ENCODE measurements at regions of chrX and their contacts with region 1.

Region 1: GRCh38 chrX:16870095-16870860 is at the start of gene RBBP7:
- DNase-seq: peak; percentile 85
- ATAC-seq: peak; percentile 81
- H3K4me3 Mint-ChIP-seq: peak within 1 kb of the TSS; percentile 91
- H3K27ac Mint-ChIP-seq: peak within 1 kb of the TSS; percentile 94
- H3K4me1 Mint-ChIP-seq: peaks cover 49% of the 10 kb centered on the region
- H3K27me3 Mint-ChIP-seq: no peaks in the 10 kb centered on the region
- CTCF ChIP-seq: no peak
- total RNA-seq, gene RBBP7: 97.9 and 103 TPM in 2 replicates

Region 2: GRCh38 chrX:16772460-16772859 is 97.8 kb before region 1 on chrX:
- CTCF ChIA-PET with region 1: no interaction called
- POLR2A ChIA-PET with region 1: no interaction called
- intact Hi-C with region 1: no loop called
- DNase-seq: no peak
- ATAC-seq: no peak
- H3K4me3 Mint-ChIP-seq: no peak overlapping the region
- H3K27ac Mint-ChIP-seq: no peak overlapping the region
- H3K4me1 Mint-ChIP-seq: peaks cover 2% of the 10 kb centered on the region
- H3K27me3 Mint-ChIP-seq: no peaks in the 10 kb centered on the region
- CTCF ChIP-seq: no peak

Region 3: DNA sequence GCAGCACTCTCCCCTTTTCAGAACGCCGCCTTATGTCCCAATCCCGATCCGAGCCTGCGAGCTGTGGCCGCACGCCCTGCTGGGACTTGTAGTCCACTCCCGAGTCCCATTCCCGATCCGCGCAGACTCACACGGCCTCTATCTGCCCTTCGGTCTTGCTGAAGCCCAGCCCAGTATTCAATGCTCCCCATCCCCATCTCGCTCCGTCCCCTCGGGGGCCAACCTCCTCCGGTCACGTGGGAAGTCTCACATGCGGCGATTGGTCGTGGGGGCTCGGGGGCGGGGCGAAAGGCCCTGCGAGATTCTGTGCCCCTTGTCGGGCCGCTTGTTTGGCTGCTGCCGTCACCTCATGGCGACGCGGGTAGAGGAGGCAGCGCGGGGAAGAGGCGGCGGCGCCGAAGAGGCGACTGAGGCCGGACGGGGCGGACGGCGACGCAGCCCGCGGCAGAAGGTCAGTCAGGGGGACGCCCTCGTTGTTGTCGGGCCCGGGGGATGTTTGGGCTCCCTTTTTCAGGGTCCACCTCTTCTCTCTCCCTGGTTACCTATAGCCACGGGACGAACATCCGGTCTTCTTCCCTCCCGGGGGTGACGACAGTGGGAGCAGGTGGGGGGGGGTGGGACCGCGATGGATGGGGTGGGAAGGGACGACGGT is 84.0 kb before region 1 on chrX and contains the start of gene TXLNG:
- CTCF ChIA-PET with region 1: no interaction called
- POLR2A ChIA-PET with region 1: no interaction called
- intact Hi-C with region 1: loop called (anchors 1 kb)
- DNase-seq: peak; percentile 81
- ATAC-seq: peak; percentile 95
- H3K4me3 Mint-ChIP-seq: peak within 1 kb of the TSS; percentile 97
- H3K27ac Mint-ChIP-seq: peak within 1 kb of the TSS; percentile 90
- H3K4me1 Mint-ChIP-seq: peaks cover 18% of the 10 kb centered on the region
- H3K27me3 Mint-ChIP-seq: no peaks in the 10 kb centered on the region
- CTCF ChIP-seq: no peak
- total RNA-seq, gene TXLNG: 12.7 and 13.1 TPM in 2 replicates

Region 4: GRCh38 chrX:16882702-16883486 is 12.6 kb after region 1 on chrX:
- CTCF ChIA-PET with region 1: interaction called, 14 read pairs
- POLR2A ChIA-PET with region 1: interaction called, 51 read pairs
- intact Hi-C with region 1: loop called (anchors 1 kb)
- DNase-seq: peak; percentile 47
- ATAC-seq: peak; percentile 88
- H3K4me3 Mint-ChIP-seq: peak overlapping the region; percentile 78
- H3K27ac Mint-ChIP-seq: peak overlapping the region; percentile 86
- H3K4me1 Mint-ChIP-seq: peaks cover 20% of the 10 kb centered on the region
- H3K27me3 Mint-ChIP-seq: no peaks in the 10 kb centered on the region
- CTCF ChIP-seq: peak; percentile 46

Region 5: GRCh38 chrX:17017134-17017533 is 146.9 kb after region 1 on chrX:
- CTCF ChIA-PET with region 1: no interaction called
- POLR2A ChIA-PET with region 1: interaction called, 13 read pairs
- intact Hi-C with region 1: no loop called
- DNase-seq: no peak
- ATAC-seq: no peak
- H3K4me3 Mint-ChIP-seq: no peak overlapping the region
- H3K27ac Mint-ChIP-seq: no peak overlapping the region
- H3K4me1 Mint-ChIP-seq: peaks cover 7% of the 10 kb centered on the region
- H3K27me3 Mint-ChIP-seq: no peaks in the 10 kb centered on the region
- CTCF ChIP-seq: no peak

Region 6: GRCh38 chrX:17206584-17206983 is 336.3 kb after region 1 on chrX:
- CTCF ChIA-PET with region 1: no interaction called
- POLR2A ChIA-PET with region 1: no interaction called
- intact Hi-C with region 1: no loop called
- DNase-seq: no peak
- ATAC-seq: no peak
- H3K4me3 Mint-ChIP-seq: no peak overlapping the region
- H3K27ac Mint-ChIP-seq: no peak overlapping the region
- H3K4me1 Mint-ChIP-seq: no peaks in the 10 kb centered on the region
- H3K27me3 Mint-ChIP-seq: no peaks in the 10 kb centered on the region
- CTCF ChIP-seq: no peak

Region 7: DNA sequence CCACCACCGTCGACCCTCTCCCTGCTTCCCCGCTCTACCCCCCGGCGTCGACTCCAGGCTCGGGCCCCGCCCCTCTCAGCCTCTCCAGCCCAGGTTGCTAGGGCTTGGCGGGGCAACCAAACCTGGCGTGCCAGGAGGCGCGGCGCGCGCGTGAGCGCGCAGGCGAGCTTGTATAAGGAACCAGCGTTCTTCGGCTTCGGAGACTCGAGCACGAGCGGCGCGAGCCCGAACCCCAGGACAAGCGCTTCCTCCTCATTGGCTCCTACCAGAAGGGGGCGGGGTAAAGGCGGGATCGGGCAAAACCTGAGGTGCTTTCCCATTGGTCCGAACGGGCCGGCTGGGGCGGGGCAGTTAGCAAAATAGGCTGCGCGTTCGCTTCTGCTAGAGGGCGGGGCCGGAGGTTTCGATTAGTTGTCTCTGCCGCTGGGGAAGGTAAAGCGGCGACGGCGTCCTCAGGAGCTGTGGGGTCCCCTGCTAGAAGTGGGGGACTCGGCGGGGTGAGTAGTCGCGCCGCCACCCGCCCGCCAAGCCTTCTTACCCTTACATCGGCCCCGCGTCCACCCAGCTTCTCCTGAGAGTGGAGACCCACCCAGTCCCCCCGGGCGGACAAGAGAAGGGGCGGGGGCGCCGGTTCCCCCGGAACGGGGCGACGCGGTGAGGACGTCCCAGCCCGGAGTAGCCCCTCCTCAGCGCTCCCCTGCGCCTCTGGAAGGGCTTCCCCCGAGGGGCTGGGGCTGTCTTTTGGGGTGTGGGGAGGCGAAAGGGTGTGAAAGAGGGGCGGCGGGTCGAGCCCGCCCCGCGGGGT is 1555.1 kb after region 1 on chrX and contains the start of gene CDKL5:
- CTCF ChIA-PET with region 1: no interaction called
- POLR2A ChIA-PET with region 1: no interaction called
- intact Hi-C with region 1: loop called (anchors 2 kb)
- DNase-seq: peak; percentile 82
- ATAC-seq: peak; percentile 93
- H3K4me3 Mint-ChIP-seq: peak within 1 kb of the TSS; percentile 86
- H3K27ac Mint-ChIP-seq: peak within 1 kb of the TSS; percentile 77
- H3K4me1 Mint-ChIP-seq: peaks cover 16% of the 10 kb centered on the region
- H3K27me3 Mint-ChIP-seq: no peaks in the 10 kb centered on the region
- CTCF ChIP-seq: no peak
- total RNA-seq, gene CDKL5: 3.7 and 3.8 TPM in 2 replicates

Measured in activated B cell treated with CpG ODN at 0.5 μM for 24 hours (primary cell).